Activated T-helper 1 cell treated with anti-CD3 and anti-CD28 coated beads, Interleukin-12 subunit alpha, Interleukin-12 subunit beta, Interleukin-2, Interleukin-4 antibody, amounts not matched to agents 30 ng/mL and 10 ng/mL and 1 ng/mL, durations not matched to agents 14 hours and 24 hours and 36 hours (primary cell): ENCODE measurements at regions of chr6 and their contacts with region 1.

Region 1: GRCh38 chr6:144131248-144131709 is 19.0 kb upstream of the STX11 start:
- DNase-seq: no peak
- H3K4me3 Mint-ChIP-seq: no peak overlapping the region
- H3K27ac Mint-ChIP-seq: peak overlapping the region; percentile 93
- H3K4me1 Mint-ChIP-seq: peaks cover 16% of the 10 kb centered on the region
- H3K27me3 Mint-ChIP-seq: no peaks in the 10 kb centered on the region

Region 2: DNA sequence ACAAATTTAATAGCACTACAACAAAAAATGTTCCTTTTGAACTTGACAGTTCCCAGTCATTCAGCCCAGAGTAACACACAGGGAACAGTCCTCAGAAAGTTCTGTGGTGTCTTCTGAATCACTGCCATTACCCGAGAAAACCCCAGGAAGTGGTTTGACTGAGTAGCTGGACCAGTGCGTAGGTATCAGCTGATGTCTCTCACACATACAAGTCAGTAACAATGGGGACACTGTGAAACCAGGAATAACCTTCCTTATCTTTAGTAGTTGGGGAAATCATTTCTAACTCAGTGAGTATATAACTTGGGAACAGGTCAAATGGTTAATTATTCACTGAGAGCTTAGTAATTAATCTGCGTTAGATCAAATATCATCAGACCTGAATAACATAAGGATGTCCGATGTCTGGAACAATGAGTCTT is 1259.4 kb before region 1 on chr6:
- intact Hi-C with region 1: no loop called
- DNase-seq: peak; percentile 55
- H3K4me3 Mint-ChIP-seq: peak overlapping the region; percentile 40
- H3K27ac Mint-ChIP-seq: peak overlapping the region; percentile 78
- H3K4me1 Mint-ChIP-seq: peaks cover 86% of the 10 kb centered on the region
- H3K27me3 Mint-ChIP-seq: no peaks in the 10 kb centered on the region

Region 3: GRCh38 chr6:144055121-144055931 is 76.0 kb before region 1 on chr6:
- intact Hi-C with region 1: loop called (anchors 2 kb)
- DNase-seq: peak; percentile 37
- H3K4me3 Mint-ChIP-seq: peak overlapping the region; percentile 83
- H3K27ac Mint-ChIP-seq: peak overlapping the region; percentile 98
- H3K4me1 Mint-ChIP-seq: peaks cover 48% of the 10 kb centered on the region
- H3K27me3 Mint-ChIP-seq: no peaks in the 10 kb centered on the region

Region 4: GRCh38 chr6:144063744-144064401 is 67.4 kb before region 1 on chr6:
- intact Hi-C with region 1: loop called (anchors 2 kb)
- DNase-seq: peak; percentile 89
- H3K4me3 Mint-ChIP-seq: peak overlapping the region; percentile 83
- H3K27ac Mint-ChIP-seq: peak overlapping the region; percentile 82
- H3K4me1 Mint-ChIP-seq: peaks cover 44% of the 10 kb centered on the region
- H3K27me3 Mint-ChIP-seq: no peaks in the 10 kb centered on the region

Region 5: GRCh38 chr6:144179828-144180227 is 48.5 kb after region 1 on chr6:
- intact Hi-C with region 1: loop called (anchors 1 kb)
- DNase-seq: no peak
- H3K4me3 Mint-ChIP-seq: no peak overlapping the region
- H3K27ac Mint-ChIP-seq: no peak overlapping the region
- H3K4me1 Mint-ChIP-seq: peaks cover 47% of the 10 kb centered on the region
- H3K27me3 Mint-ChIP-seq: no peaks in the 10 kb centered on the region

Region 6: GRCh38 chr6:144248476-144249301 is 117.4 kb after region 1 on chr6:
- intact Hi-C with region 1: loop called (anchors 1 kb)
- DNase-seq: no peak
- H3K4me3 Mint-ChIP-seq: no peak overlapping the region
- H3K27ac Mint-ChIP-seq: peak overlapping the region; percentile 57
- H3K4me1 Mint-ChIP-seq: peaks cover 26% of the 10 kb centered on the region
- H3K27me3 Mint-ChIP-seq: peaks cover 7% of the 10 kb centered on the region

Region 7: DNA sequence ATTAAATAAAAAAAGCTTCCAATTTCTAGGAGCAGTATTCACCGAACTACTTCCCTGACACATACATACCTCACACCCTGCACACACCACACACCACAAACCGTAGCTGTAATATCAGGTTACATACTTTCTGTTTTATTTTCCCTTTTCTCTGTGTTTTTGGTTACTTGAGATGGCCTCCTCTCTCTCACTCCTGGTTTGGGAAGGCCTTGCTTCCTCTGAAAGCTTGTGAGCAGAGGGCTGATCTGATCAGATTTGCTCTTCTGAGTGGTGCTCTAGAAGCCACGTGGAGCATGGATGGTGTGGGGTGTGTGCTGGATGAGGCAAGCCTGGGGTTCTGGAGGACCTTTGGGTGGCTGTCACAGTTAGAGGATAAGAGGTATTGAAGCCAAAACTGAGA is 174.7 kb after region 1 on chr6:
- intact Hi-C with region 1: loop called (anchors 1 kb)
- DNase-seq: peak; percentile 41
- H3K4me3 Mint-ChIP-seq: peak overlapping the region; percentile 58
- H3K27ac Mint-ChIP-seq: peak overlapping the region; percentile 85
- H3K4me1 Mint-ChIP-seq: peaks cover 51% of the 10 kb centered on the region
- H3K27me3 Mint-ChIP-seq: peaks cover 6% of the 10 kb centered on the region

Region 8: GRCh38 chr6:144469144-144469575 is 337.9 kb after region 1 on chr6:
- intact Hi-C with region 1: loop called (anchors 1 kb)
- DNase-seq: no peak
- H3K4me3 Mint-ChIP-seq: peak overlapping the region; percentile 54
- H3K27ac Mint-ChIP-seq: peak overlapping the region; percentile 86
- H3K4me1 Mint-ChIP-seq: peaks cover 27% of the 10 kb centered on the region
- H3K27me3 Mint-ChIP-seq: no peaks in the 10 kb centered on the region